H1 (cell line): ENCODE measurements at regions of chr17 and their contacts with region 1.

Region 1: GRCh38 chr17:62724398-62725146 is 83.5 kb downstream of the MARCHF10 start:
- DNase-seq: no peak
- H3K4me3 ChIP-seq: no peak overlapping the region
- H3K27ac ChIP-seq: no peak overlapping the region
- H3K4me1 ChIP-seq: peaks cover 0 to 9% (median 2%) of the 10 kb centered on the region in 4 experiments; a peak in 3 of 7 replicates
- H3K27me3 ChIP-seq: no peaks in the 10 kb centered on the region
- CTCF ChIP-seq: no peak
- EP300 ChIP-seq: no peak
- POLR2A ChIP-seq: no peak
- RAD21 ChIP-seq: no peak

Region 2: GRCh38 chr17:62614142-62614541 is 110.4 kb before region 1 on chr17:
- CTCF ChIA-PET with region 1: no interaction called
- POLR2A ChIA-PET with region 1: no interaction called
- DNase-seq: no peak
- H3K4me3 ChIP-seq: no peak overlapping the region
- H3K27ac ChIP-seq: no peak overlapping the region
- H3K4me1 ChIP-seq: peaks cover 0 to 12% (median 6%) of the 10 kb centered on the region in 4 experiments; a peak in 6 of 7 replicates
- H3K27me3 ChIP-seq: no peaks in the 10 kb centered on the region
- CTCF ChIP-seq: no peak
- EP300 ChIP-seq: no peak
- POLR2A ChIP-seq: no peak
- RAD21 ChIP-seq: no peak

Region 3: GRCh38 chr17:62714016-62714746 is 10.4 kb before region 1 on chr17:
- CTCF ChIA-PET with region 1: interaction called, 43 read pairs
- POLR2A ChIA-PET with region 1: no interaction called
- DNase-seq: no peak
- H3K4me3 ChIP-seq: no peak overlapping the region
- H3K27ac ChIP-seq: 0 out of 2 replicates have a peak overlapping the region, but pooled peaks have one; percentile 6
- H3K4me1 ChIP-seq: peaks cover 0 to 3% (median 0%) of the 10 kb centered on the region in 4 experiments; a peak in 4 of 7 replicates
- H3K27me3 ChIP-seq: 0 out of 7 replicates have a peak, but pooled peaks cover 0 to 1% (median 0%) of the 10 kb centered on the region in 4 experiments
- CTCF ChIP-seq: no peak
- EP300 ChIP-seq: no peak
- POLR2A ChIP-seq: no peak
- RAD21 ChIP-seq: no peak

Region 4: GRCh38 chr17:62739645-62740388 is 15.2 kb after region 1 on chr17:
- CTCF ChIA-PET with region 1: interaction called, 11 read pairs
- POLR2A ChIA-PET with region 1: no interaction called
- DNase-seq: no peak
- H3K4me3 ChIP-seq: no peak overlapping the region
- H3K27ac ChIP-seq: no peak overlapping the region
- H3K4me1 ChIP-seq: peaks cover 5 to 14% (median 8%) of the 10 kb centered on the region in 4 experiments; a peak in 6 of 7 replicates
- H3K27me3 ChIP-seq: no peaks in the 10 kb centered on the region
- CTCF ChIP-seq: no peak
- EP300 ChIP-seq: no peak
- POLR2A ChIP-seq: no peak
- RAD21 ChIP-seq: no peak

Region 5: DNA sequence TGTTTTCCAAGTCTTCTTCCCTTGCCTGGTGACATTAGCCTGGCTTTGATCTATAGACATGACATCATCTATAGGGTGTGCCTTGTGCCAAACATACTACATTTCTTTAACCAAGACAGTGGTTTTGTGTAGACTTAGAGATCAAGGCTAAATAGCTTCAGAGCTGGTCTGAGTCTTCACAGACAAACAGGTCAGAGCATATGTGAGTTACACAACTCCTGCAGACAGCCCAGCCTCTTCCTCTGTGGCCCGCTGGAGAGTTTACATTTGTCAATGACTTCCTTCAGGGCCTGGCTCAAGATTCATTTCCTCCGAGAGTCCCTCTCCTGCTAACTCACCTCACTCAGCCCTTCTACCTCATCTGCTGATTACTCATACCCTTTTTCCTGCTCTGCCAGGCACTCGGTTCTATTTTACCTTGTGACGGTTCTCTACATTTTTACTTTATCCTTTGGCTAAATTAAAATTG is 168.3 kb after region 1 on chr17:
- CTCF ChIA-PET with region 1: no interaction called
- POLR2A ChIA-PET with region 1: no interaction called
- DNase-seq: no peak
- H3K4me3 ChIP-seq: no peak overlapping the region
- H3K27ac ChIP-seq: no peak overlapping the region
- H3K4me1 ChIP-seq: peaks cover 0 to 2% (median under 1%) of the 10 kb centered on the region in 4 experiments; a peak in 2 of 7 replicates
- H3K27me3 ChIP-seq: no peaks in the 10 kb centered on the region
- CTCF ChIP-seq: no peak
- EP300 ChIP-seq: no peak
- POLR2A ChIP-seq: no peak
- RAD21 ChIP-seq: no peak